BJ (cell line): ENCODE measurements at regions of chr2 and their contacts with region 1.

Region 1: DNA sequence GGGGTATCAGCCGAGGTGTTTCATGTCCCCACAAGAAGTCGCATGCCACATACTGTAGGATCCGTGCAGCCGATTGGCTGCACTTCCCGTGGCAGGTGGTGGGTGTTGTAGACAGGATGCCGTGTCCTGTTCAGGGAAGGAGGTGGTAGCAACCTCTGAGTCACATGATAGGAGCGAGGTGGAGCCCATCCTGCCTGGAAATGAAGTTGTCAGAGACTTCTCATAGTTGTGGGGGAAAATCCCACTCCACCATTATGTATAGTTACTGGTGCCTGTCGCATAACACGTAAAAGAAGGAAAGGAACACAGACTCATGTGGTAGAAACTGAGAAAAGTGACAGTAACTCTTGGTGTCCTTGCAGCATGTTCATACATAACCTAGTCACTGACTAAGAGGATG is 91.4 kb upstream of the IL1R2 start:
- DNase-seq: no peak
- H3K4me3 ChIP-seq: no peak overlapping the region
- H3K27me3 ChIP-seq: no peaks in the 10 kb centered on the region
- CTCF ChIP-seq: no peak

Region 2: GRCh38 chr2:102187496-102188150 is 287.2 kb after region 1 on chr2:
- CTCF ChIA-PET with region 1: no interaction called
- POLR2A ChIA-PET with region 1: interaction called, 11 read pairs
- DNase-seq: no peak
- H3K4me3 ChIP-seq: peak overlapping the region; percentile 37
- H3K27me3 ChIP-seq: no peaks in the 10 kb centered on the region; the same call in 1 of the 2 replicates
- CTCF ChIP-seq: peak; percentile 25; the same call in 1 of the 2 replicates